ENCODE measurements at regions of chr7 and their contacts with region 1.

Region 1: DNA sequence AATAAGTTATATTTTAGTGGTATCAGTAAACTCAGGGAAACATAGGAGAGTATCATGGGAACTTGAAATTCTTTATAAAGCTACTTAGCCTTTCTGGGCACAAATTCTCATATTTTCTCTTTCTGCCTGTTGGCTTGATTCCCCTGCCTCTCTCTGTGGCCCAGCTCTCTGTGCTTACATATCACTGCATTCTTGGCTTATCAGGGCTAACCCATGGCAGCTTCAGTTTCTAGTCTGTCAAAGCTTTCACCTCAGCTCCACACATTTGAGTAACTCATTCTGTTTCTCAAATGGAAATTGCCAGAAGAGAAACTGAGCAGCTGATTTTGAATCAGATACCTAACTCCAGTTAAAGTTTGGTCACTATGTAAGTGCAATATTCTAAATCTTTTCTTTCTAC is 713.1 kb downstream of the DNAJB9 start:
- DNase-seq: no peak
- H3K4me3 Mint-ChIP-seq: no peak overlapping the region
- H3K27ac Mint-ChIP-seq: no peak overlapping the region
- H3K4me1 Mint-ChIP-seq: peaks cover 17% of the 10 kb centered on the region
- H3K27me3 Mint-ChIP-seq: no peaks in the 10 kb centered on the region
- CTCF ChIP-seq: no peak

Region 2: GRCh38 chr7:108848486-108848885 is 434.2 kb before region 1 on chr7:
- CTCF ChIA-PET with region 1: no interaction called
- intact Hi-C with region 1: no loop called
- DNase-seq: no peak
- H3K4me3 Mint-ChIP-seq: no peak overlapping the region
- H3K27ac Mint-ChIP-seq: no peak overlapping the region
- H3K4me1 Mint-ChIP-seq: no peaks in the 10 kb centered on the region
- H3K27me3 Mint-ChIP-seq: peaks cover 23% of the 10 kb centered on the region
- CTCF ChIP-seq: no peak

Region 3: DNA sequence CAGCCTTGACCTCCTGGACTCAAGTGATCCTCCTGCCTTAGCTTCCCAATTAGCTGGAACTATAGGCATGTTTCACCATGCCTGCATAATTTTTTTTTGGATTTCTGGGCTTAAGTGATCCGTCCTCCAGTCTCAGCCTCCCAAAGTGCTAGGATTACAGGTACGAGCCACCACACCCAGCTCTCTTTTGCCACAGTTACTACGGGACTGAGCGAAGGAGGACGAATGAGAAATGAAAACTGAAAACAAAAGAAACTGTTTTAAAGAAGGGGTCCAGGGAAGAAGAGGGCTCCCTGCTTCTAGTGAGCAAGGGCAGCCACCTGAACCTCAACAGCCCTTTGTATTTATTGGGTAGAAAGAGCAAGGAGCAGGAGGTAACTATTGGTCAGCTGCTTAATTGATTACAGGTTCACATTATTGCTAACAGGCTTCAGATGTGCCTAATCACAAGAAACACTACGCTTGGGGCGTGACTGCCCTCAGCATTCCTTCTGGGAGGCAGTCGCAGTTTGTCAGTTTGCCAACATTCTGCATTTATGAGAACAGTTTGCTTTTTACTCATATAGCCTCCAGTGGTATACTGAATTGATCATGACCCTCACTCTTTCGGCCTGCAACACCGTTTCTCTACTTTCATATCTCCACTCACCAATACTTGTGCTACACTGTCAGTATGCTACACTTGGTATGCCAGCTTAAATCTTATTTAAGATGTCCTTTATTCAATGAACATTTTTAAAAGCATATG is 36.2 kb before region 1 on chr7:
- CTCF ChIA-PET with region 1: no interaction called
- intact Hi-C with region 1: loop called (anchors 2 kb)
- DNase-seq: peak; percentile 57
- H3K4me3 Mint-ChIP-seq: peak overlapping the region; percentile 66
- H3K27ac Mint-ChIP-seq: peak overlapping the region; percentile 81
- H3K4me1 Mint-ChIP-seq: peaks cover 18% of the 10 kb centered on the region
- H3K27me3 Mint-ChIP-seq: no peaks in the 10 kb centered on the region
- CTCF ChIP-seq: no peak

Measured in Calu3 (cell line).